Activated CD4-positive, alpha-beta T cell treated with anti-CD3 and anti-CD28 coated beads, Interleukin-2, amount 10 ng/mL, durations not matched to agents 7 days and 5 days (primary cell): ENCODE measurements at regions of chr18 and their contacts with region 1.

Region 1: GRCh38 chr18:63100630-63101055 is 218.9 kb downstream of the BCL2 start:
- DNase-seq: no peak
- H3K4me3 Mint-ChIP-seq: no peak overlapping the region
- H3K27ac Mint-ChIP-seq: no peak overlapping the region
- H3K4me1 Mint-ChIP-seq: peaks cover 70% of the 10 kb centered on the region
- H3K27me3 Mint-ChIP-seq: peaks cover 15% of the 10 kb centered on the region

Region 2: GRCh38 chr18:63113899-63114565 is 13.4 kb after region 1 on chr18:
- CTCF ChIA-PET with region 1: interaction called, 11 read pairs
- POLR2A ChIA-PET with region 1: no interaction called
- DNase-seq: no peak
- H3K4me3 Mint-ChIP-seq: no peak overlapping the region
- H3K27ac Mint-ChIP-seq: no peak overlapping the region
- H3K4me1 Mint-ChIP-seq: peaks cover 21% of the 10 kb centered on the region
- H3K27me3 Mint-ChIP-seq: peaks cover 35% of the 10 kb centered on the region